Activated CD8-positive, alpha-beta T cell treated with anti-CD3 and anti-CD28 coated beads for 36 hours (primary cell): ENCODE measurements at regions of chr13 and their contacts with region 1.

Region 1: GRCh38 chr13:40549500-40550094 is 116.8 kb downstream of the FOXO1 start:
- DNase-seq: no peak
- ATAC-seq: no peak
- H3K4me3 Mint-ChIP-seq: no peak overlapping the region
- H3K27ac Mint-ChIP-seq: no peak overlapping the region
- H3K4me1 Mint-ChIP-seq: peaks cover 38% of the 10 kb centered on the region
- H3K27me3 Mint-ChIP-seq: no peaks in the 10 kb centered on the region
- CTCF ChIP-seq: no peak

Region 2: DNA sequence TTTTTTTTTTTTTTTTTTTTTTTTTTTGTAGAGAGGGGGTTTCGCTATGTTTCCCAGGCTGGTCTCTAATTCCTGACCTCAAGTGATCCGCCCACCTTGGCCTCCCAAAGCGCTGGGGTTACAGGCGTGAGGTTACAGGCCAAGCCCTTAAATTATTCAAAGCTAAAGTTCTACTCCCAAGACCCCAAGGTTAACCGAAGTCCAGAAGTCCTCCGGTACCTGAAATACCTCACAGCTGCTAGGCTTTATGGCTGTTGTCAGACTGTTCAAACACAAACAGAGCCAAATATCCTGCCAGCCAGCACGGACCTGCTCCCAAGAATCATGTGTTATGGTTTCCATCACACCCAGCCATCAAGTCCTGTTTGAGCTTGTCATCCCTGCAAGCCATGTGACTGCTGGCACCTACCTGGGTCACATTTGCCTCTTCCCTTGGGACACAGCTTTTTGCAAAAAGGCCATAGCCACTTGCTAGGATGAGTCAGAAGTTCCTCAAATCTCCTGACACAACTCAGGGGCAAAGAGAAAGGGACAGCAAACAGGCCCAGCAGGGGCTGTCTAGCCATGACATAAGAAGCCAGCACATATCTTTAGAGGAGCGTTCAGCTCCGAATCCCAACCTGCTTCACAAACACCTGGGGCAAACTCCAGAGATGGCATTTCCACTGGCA is 13.0 kb before region 1 on chr13:
- CTCF ChIA-PET with region 1: no interaction called
- POLR2A ChIA-PET with region 1: interaction called, 10 read pairs
- intact Hi-C with region 1: no loop called
- DNase-seq: no peak
- ATAC-seq: no peak
- H3K4me3 Mint-ChIP-seq: no peak overlapping the region
- H3K27ac Mint-ChIP-seq: no peak overlapping the region
- H3K4me1 Mint-ChIP-seq: peaks cover 10% of the 10 kb centered on the region
- H3K27me3 Mint-ChIP-seq: no peaks in the 10 kb centered on the region
- CTCF ChIP-seq: no peak

Region 3: DNA sequence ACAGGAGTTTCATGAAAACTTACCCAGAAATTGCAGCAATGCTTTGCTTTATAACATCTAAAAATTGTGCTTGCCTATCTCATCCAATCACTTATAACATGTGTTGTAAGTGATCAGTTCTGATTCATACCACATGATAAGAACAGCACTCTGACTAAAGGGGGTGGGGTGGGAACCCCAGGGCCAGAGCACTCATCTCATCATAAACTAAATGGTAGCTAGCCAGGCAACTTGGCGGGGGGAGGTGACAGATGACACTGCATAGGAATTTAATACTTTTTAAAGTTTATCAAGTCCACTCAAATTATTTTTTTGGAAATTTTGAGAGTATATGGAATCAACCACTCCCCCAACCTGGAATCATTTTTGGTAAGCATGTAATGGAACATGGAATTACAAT is 74.8 kb after region 1 on chr13:
- CTCF ChIA-PET with region 1: no interaction called
- POLR2A ChIA-PET with region 1: no interaction called
- intact Hi-C with region 1: no loop called
- DNase-seq: peak; percentile 80
- ATAC-seq: peak; percentile 84
- H3K4me3 Mint-ChIP-seq: no peak overlapping the region
- H3K27ac Mint-ChIP-seq: peak overlapping the region; percentile 48
- H3K4me1 Mint-ChIP-seq: peaks cover 75% of the 10 kb centered on the region
- H3K27me3 Mint-ChIP-seq: no peaks in the 10 kb centered on the region
- CTCF ChIP-seq: no peak